HepG2 (cell line): ENCODE measurements at regions of chr6 and their contacts with region 1.

Region 1: DNA sequence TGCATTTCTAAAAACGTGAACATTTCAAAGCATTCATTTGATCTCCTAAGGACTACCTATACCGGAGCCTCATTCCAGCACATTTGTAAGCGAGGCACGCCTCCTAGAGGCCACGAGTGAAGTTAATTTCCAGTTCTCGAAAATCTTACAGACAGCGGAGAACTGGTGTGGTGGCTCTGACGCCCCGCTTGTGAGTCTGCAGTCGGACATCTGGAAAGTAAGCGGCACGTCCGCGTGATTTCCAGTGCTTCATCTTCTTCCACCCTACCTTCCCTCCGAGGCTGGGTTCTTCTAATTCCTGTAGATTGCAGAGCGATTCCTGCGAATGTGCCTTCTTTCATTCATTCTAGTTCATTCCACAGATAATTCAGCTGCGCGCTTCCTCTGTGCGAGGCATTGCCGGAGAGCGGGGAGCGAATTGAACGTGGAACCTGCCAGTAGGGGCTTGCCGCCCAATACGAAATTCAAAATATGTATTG is 810 bp upstream of the PRIM2 start:
- DNase-seq: peak; percentile 90
- ATAC-seq: peak; percentile 87
- H3K4me3 ChIP-seq: peak overlapping the region; percentile 64 to 76 (median 76)
- H3K27ac ChIP-seq: peak overlapping the region; percentile 42
- H3K4me1 ChIP-seq: peaks cover 46% of the 10 kb centered on the region
- H3K27me3 ChIP-seq: no peaks in the 10 kb centered on the region; a peak in 1 of 5 replicates
- CTCF ChIP-seq: peak; percentile 95
- EP300 ChIP-seq: no peak
- POLR2A ChIP-seq: peak in 1 of 2 experiments; percentile 40; a peak in 1 of 4 replicates
- RAD21 ChIP-seq: peak; percentile 81

Region 2: GRCh38 chr6:56955171-56956045 is 361.2 kb before region 1 on chr6:
- CTCF ChIA-PET with region 1: interaction called, 4 read pairs
- POLR2A ChIA-PET with region 1: no interaction called
- in situ Hi-C with region 1: no loop called
- intact Hi-C with region 1: loop called (anchors 1 kb)
- DNase-seq: peak; percentile 83
- ATAC-seq: peak; percentile 91
- H3K4me3 ChIP-seq: peak overlapping the region; percentile 51 to 75 (median 56)
- H3K27ac ChIP-seq: no peak overlapping the region
- H3K4me1 ChIP-seq: peaks cover 14% of the 10 kb centered on the region
- H3K27me3 ChIP-seq: peaks cover 0 to 14% of the 10 kb centered on the region in 2 experiments; a peak in 3 of 5 replicates
- CTCF ChIP-seq: peak; percentile 93
- EP300 ChIP-seq: no peak
- POLR2A ChIP-seq: no peak
- RAD21 ChIP-seq: peak; percentile 86

Region 3: GRCh38 chr6:57040009-57040408 is 276.6 kb before region 1 on chr6:
- CTCF ChIA-PET with region 1: no interaction called
- POLR2A ChIA-PET with region 1: no interaction called
- in situ Hi-C with region 1: loop called (anchors 25 kb)
- intact Hi-C with region 1: no loop called
- DNase-seq: no peak
- ATAC-seq: peak; percentile 82
- H3K4me3 ChIP-seq: no peak overlapping the region
- H3K27ac ChIP-seq: no peak overlapping the region
- H3K4me1 ChIP-seq: no peaks in the 10 kb centered on the region
- H3K27me3 ChIP-seq: peaks cover 2 to 16% of the 10 kb centered on the region in 2 experiments; a peak in 4 of 5 replicates
- CTCF ChIP-seq: peak; percentile 18; the same call in 1 of the 2 replicates
- EP300 ChIP-seq: no peak
- POLR2A ChIP-seq: no peak
- RAD21 ChIP-seq: no peak

Region 4: GRCh38 chr6:57172136-57173055 is 144.2 kb before region 1 on chr6 and contains the start of gene BAG2:
- CTCF ChIA-PET with region 1: no interaction called
- POLR2A ChIA-PET with region 1: no interaction called
- in situ Hi-C with region 1: no loop called
- intact Hi-C with region 1: loop called (anchors 5 kb)
- DNase-seq: peak; percentile 88
- ATAC-seq: peak; percentile 94
- H3K4me3 ChIP-seq: peak within 1 kb of the TSS; percentile 69 to 90 (median 72)
- H3K27ac ChIP-seq: peak within 1 kb of the TSS; percentile 94
- H3K4me1 ChIP-seq: peaks cover 41% of the 10 kb centered on the region
- H3K27me3 ChIP-seq: no peaks in the 10 kb centered on the region; a peak in 1 of 5 replicates
- CTCF ChIP-seq: peak; percentile 59
- EP300 ChIP-seq: peak; percentile 6 to 53; a peak in 2 of 4 replicates
- POLR2A ChIP-seq: peak; percentile 93 to 98
- RAD21 ChIP-seq: peak; percentile 73; the same call in 1 of the 2 replicates
- total RNA-seq, gene BAG2: 15.1 and 23.0 TPM in 2 replicates

Region 5: DNA sequence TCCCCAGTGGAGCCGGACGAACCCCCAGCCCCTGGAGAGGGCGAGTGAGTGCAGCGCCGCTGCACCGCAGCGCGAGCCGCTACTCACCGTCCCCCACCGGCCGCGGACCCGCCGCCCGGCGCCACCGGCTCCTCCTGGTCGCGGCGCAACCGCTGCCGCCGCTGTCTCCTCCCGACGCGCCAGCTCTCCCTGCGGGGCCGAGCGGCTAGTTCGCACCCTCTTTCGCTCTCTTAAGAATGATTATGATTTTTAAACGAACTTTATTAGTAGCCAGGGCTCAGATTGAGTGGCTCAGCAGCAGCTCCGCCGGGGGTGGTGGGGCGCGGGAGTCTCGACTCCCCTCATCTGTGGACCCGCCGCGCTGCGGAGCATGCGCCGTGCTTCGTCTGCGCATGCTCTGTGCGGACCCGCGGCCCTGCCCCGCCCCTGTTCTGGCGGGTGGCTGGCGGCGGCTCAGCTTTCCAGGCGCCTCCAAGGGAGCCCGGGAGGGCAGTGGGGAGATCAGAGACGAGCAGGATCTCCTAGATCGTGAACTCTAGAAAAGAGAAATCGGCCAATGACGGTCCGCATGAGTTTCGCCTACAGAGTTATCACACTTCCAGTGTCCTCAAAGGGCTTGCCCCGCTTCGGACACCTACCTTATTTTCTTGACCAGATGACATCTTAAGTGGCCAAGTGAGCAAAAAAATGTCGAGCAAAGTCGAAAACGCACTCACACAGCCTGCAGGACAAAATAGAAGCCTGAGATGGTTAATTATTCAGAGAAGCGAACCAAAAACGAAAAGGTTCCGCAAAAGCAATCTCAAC is 94.5 kb before region 1 on chr6 and contains the start of gene RAB23:
- CTCF ChIA-PET with region 1: no interaction called
- POLR2A ChIA-PET with region 1: no interaction called
- in situ Hi-C with region 1: no loop called
- intact Hi-C with region 1: loop called (anchors 2 kb)
- DNase-seq: peak; percentile 75
- ATAC-seq: peak; percentile 92
- H3K4me3 ChIP-seq: peak within 1 kb of the TSS; percentile 88 to 95 (median 93)
- H3K27ac ChIP-seq: peak within 1 kb of the TSS; percentile 77
- H3K4me1 ChIP-seq: peaks cover 31% of the 10 kb centered on the region
- H3K27me3 ChIP-seq: no peaks in the 10 kb centered on the region; a peak in 1 of 5 replicates
- CTCF ChIP-seq: no peak
- EP300 ChIP-seq: no peak
- POLR2A ChIP-seq: peak; percentile 65 to 94
- RAD21 ChIP-seq: no peak
- total RNA-seq, gene RAB23: 16.4 and 24.2 TPM in 2 replicates